Left cardiac atrium (tissue), 4 donors: ENCODE measurements at regions of chr14 and their contacts with region 1.

Region 1: GRCh38 chr14:34087556-34087955 is 136.7 kb upstream of the EGLN3 start:
- DNase-seq: no peak
- ATAC-seq: no peak

Region 2: DNA sequence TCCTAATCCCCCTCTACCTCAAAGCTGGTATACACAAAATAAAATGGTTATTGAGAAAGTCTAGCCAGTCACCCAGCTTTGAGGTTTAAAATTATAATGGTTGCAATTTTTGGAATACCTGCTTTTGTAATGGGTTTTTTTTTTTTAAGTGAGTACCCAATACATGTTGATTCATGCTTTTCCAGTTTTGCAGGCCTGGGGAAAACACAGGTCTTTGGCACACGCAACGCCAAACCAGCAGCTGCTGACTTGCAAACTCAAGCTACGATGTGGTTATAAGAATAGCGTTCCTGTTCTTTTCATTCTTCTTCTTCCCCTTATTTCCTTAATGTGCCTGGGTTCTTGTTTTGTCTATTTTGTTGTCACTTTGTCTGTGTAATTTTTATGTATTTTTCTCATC is 369.7 kb before region 1 on chr14:
- intact Hi-C with region 1: no loop called
- DNase-seq: no peak
- ATAC-seq: no peak

Region 3: GRCh38 chr14:33950320-33951182 is 137.0 kb before region 1 on chr14 and contains the start of gene EGLN3:
- intact Hi-C with region 1: loop called in 1 of 2 experiments (anchors 5 kb)
- DNase-seq: peak; percentile 91
- ATAC-seq: peak; percentile 99 to 100
- total RNA-seq, gene EGLN3: 73.1 to 116 TPM

Region 4: DNA sequence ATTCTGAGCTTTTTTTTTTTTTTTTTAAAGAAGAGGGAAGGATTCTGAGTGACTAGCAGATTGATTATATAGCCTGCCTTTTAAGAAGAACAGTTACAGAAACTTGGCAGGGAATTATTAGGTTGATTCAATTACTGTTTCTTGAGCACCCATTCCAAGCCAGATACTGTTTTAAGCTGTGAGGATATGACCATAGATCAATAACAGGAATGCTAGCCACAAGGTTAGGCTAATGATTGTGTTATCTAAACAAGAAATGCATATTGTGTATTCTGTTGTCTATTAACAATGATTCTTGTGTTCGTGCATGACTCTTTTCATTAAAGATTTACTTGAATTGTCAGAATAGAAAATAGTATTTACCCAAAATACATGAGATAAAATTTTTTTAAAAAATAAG is 1101.9 kb after region 1 on chr14:
- intact Hi-C with region 1: no loop called
- DNase-seq: no peak
- ATAC-seq: no peak